ENCODE measurements at regions of chr11 and their contacts with region 1.

Region 1: DNA sequence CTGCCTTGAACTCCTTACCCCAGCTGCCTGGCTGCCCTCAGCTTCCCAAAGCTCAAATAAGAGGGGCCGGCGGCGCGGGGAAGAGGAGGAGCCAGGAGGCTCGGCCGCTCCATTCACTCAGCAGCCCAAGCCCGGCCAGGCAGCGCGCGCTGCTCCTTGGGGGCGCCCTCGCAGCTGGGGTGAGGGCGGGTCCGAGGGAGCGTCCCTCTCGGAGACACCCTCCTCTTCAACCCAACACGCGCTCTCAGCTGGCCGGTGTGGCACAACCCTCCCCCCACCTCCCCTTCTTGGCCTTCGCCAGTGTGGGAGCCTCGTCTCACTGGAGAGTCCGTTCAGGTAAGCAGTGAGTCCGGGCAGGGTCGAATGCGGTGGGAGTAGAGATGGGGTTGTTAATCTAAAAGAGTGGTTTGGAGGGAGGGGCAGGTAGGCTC is at the start of gene WT1:
- DNase-seq: peak; percentile 84 to 90 (median 85)
- ATAC-seq: peak; percentile 83
- H3K4me3 ChIP-seq: peak within 1 kb of the TSS; percentile 76
- H3K27ac ChIP-seq: peak within 1 kb of the TSS; percentile 92
- H3K4me1 ChIP-seq: peaks cover 14 to 47% of the 10 kb centered on the region in 2 experiments; a peak in 4 of 5 replicates
- H3K27me3 ChIP-seq: no peaks in the 10 kb centered on the region
- CTCF ChIP-seq: no peak; a peak in 1 of 6 replicates
- EP300 ChIP-seq: 0 out of 2 replicates have a peak, but pooled peaks have one; percentile 15
- POLR2A ChIP-seq: peak; percentile 71
- RAD21 ChIP-seq: no peak; a peak in 2 of 4 replicates
- polyA plus RNA-seq, gene WT1: 7.1 to 7.7 TPM

Region 2: GRCh38 chr11:32385998-32386397 is 49.5 kb before region 1 on chr11:
- CTCF ChIA-PET with region 1: no interaction called
- POLR2A ChIA-PET with region 1: no interaction called
- in situ Hi-C with region 1: no loop called
- intact Hi-C with region 1: loop called (anchors 1 kb)
- DNase-seq: peak; percentile 53 to 68 (median 60)
- ATAC-seq: peak; percentile 86
- H3K4me3 ChIP-seq: no peak overlapping the region
- H3K27ac ChIP-seq: peak overlapping the region; percentile 59
- H3K4me1 ChIP-seq: peaks cover 4 to 30% of the 10 kb centered on the region in 2 experiments
- H3K27me3 ChIP-seq: no peaks in the 10 kb centered on the region
- CTCF ChIP-seq: peak; percentile 50 to 68 (median 67)
- EP300 ChIP-seq: peak; percentile 5; the same call in 1 of the 2 replicates
- POLR2A ChIP-seq: no peak
- RAD21 ChIP-seq: peak; percentile 50 to 72

Region 3: DNA sequence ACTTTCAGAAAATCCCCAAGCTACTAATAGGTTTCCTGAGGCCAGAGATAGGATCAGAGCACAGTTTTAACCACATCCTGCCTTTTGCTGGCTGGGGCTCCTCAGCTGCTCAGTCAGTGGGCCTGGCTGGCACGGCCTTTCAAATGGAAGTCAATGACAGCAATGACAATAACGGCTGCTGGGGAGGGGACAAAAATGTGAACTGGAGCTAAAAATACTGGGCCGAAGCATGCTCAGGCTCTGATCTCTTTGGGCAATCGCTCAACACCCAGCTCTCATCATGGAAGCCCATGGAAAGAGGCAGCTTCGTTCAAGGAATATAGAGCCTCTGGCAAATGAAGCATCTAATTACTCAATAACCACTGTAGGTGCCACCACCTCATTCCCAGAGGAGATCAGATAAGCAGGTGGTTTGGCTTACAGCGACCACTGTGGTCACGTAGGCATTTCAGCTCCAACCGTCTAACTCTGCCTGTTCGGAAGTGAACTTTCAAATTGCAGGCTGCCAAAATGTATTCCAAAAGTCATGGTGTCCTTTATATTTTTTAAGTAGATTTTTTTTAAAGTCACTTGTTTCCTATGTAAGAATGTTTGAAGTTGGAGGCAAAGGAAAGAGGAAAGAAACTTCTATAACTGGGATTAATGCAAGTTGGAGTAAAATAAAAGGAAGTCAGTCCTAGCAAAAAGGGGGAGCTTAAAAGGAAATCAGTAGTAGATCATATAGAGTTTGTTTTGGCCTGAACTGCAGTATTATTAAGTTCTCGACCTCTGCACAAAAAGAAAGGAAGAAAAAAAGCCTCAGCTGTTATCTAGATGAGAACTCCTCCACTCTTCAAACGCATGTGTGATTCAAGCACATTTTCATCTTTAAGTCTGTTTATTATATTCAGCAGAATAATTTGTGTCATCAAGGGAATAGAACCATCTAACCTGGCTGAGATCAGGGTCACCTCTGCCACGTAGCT is 14.3 kb before region 1 on chr11:
- CTCF ChIA-PET with region 1: no interaction called
- POLR2A ChIA-PET with region 1: interaction called, 15 read pairs
- in situ Hi-C with region 1: no loop called
- intact Hi-C with region 1: loop called (anchors 1 kb)
- DNase-seq: peak; percentile 31 to 83 (median 57)
- ATAC-seq: peak; percentile 88
- H3K4me3 ChIP-seq: peak overlapping the region; percentile 7; the same call in 1 of the 2 replicates
- H3K27ac ChIP-seq: peak overlapping the region; percentile 91
- H3K4me1 ChIP-seq: peaks cover 26 to 51% of the 10 kb centered on the region in 2 experiments
- H3K27me3 ChIP-seq: no peaks in the 10 kb centered on the region
- CTCF ChIP-seq: 0 out of 6 replicates have a peak, but pooled peaks of 1 of the 3 experiments have one; percentile 8
- EP300 ChIP-seq: peak; percentile 85
- POLR2A ChIP-seq: peak; percentile 37; the same call in 1 of the 2 replicates
- RAD21 ChIP-seq: no peak

Region 4: GRCh38 chr11:32448232-32448631 is 12.7 kb after region 1 on chr11:
- CTCF ChIA-PET with region 1: interaction called, 3 read pairs
- POLR2A ChIA-PET with region 1: interaction called, 14 read pairs
- in situ Hi-C with region 1: no loop called
- intact Hi-C with region 1: no loop called
- DNase-seq: peak in 3 of 4 experiments; percentile 46 to 88 (median 69)
- ATAC-seq: peak; percentile 79
- H3K4me3 ChIP-seq: no peak overlapping the region
- H3K27ac ChIP-seq: no peak overlapping the region
- H3K4me1 ChIP-seq: peaks cover 13 to 27% of the 10 kb centered on the region in 2 experiments; a peak in 4 of 5 replicates
- H3K27me3 ChIP-seq: no peaks in the 10 kb centered on the region
- CTCF ChIP-seq: peak; percentile 65 to 70 (median 70)
- EP300 ChIP-seq: no peak
- POLR2A ChIP-seq: no peak
- RAD21 ChIP-seq: peak; percentile 51 to 70